Activated naive CD4-positive, alpha-beta T cell treated with anti-CD3 and anti-CD28 coated beads for 36 hours (primary cell): ENCODE measurements at regions of chr12 and their contacts with region 1.

Region 1: DNA sequence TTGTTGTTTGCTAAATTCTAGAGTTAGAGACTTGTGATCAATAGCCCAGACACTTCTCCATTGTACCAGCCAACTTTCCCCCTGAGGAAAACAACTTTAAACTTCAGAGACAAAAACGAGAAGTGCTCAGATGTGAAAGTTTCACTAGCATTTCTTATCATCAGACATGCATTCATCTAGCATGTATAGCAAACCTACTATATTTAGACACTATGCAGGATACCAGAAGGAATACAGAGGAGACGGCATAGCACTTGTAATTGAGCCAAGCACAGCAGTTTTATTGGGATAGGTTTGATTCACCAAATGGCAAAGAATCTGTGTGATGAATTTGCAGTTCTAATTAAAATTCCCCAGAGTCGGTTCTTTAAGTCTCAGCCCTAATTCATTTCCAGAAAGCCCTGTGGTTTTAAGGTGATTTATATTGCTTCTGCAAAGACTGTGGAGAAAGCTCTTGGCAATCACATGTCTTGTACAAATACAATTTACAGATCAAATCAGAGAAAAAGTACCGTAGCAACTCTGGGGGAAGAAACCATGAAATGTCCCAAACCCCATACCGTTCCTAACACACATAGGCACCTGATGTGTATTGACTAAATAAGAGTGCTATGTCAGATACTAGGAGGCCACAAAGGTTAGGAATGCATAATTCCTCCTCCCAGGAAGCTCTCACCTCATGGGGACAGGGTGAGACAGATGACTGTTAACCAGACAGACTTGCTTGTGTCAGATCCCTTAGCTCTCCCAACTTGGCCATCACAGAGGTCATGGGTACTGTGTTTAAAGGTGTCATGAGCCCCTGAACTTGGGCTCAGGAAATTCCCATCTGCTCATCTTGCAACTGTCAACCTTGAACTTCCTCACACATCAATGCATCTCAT is 69.6 kb upstream of the KRAS start:
- DNase-seq: peak; percentile 51
- H3K4me3 Mint-ChIP-seq: peak overlapping the region; percentile 33
- H3K27ac Mint-ChIP-seq: peak overlapping the region; percentile 87
- H3K4me1 Mint-ChIP-seq: peaks cover 54% of the 10 kb centered on the region
- H3K27me3 Mint-ChIP-seq: no peaks in the 10 kb centered on the region

Region 2: GRCh38 chr12:24902511-24903328 is 417.6 kb before region 1 on chr12:
- CTCF ChIA-PET with region 1: no interaction called
- intact Hi-C with region 1: loop called (anchors 2 kb)
- DNase-seq: peak; percentile 23
- H3K4me3 Mint-ChIP-seq: peak overlapping the region; percentile 85
- H3K27ac Mint-ChIP-seq: peak overlapping the region; percentile 71
- H3K4me1 Mint-ChIP-seq: peaks cover 31% of the 10 kb centered on the region
- H3K27me3 Mint-ChIP-seq: peaks cover 28% of the 10 kb centered on the region

Region 3: GRCh38 chr12:24960222-24960855 is 360.0 kb before region 1 on chr12:
- CTCF ChIA-PET with region 1: no interaction called
- intact Hi-C with region 1: loop called (anchors 2 kb)
- DNase-seq: peak; percentile 76
- H3K4me3 Mint-ChIP-seq: no peak overlapping the region
- H3K27ac Mint-ChIP-seq: no peak overlapping the region
- H3K4me1 Mint-ChIP-seq: peaks cover 23% of the 10 kb centered on the region
- H3K27me3 Mint-ChIP-seq: peaks cover 17% of the 10 kb centered on the region

Region 4: DNA sequence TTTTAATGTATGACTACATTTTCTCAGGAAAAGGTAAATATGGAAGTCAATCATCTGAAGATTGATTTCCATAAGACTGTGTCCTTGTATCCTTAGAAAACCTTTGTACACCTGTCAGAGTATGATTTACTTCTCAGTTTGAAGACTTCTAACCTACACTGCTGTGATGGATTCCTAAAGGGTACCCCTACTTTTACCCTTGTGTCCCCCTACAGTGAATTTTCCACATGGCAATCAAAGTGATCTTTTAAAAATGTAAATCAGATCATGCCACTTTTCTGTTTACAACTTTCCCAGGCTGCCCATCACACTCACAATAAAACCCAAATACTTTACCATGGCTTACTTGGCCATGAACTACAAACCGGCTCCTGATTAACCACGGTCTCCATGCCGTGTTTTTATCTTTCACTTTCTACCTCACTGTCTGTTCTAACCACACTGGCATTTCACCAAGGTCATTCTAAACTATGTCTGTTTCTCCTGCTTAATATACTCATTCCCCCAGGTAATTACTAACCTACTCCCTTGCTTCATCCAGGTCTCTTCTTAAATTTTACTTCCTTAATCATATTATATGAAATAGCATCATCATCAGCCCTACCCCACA is 133.5 kb before region 1 on chr12:
- CTCF ChIA-PET with region 1: no interaction called
- intact Hi-C with region 1: loop called (anchors 2 kb)
- DNase-seq: peak; percentile 37
- H3K4me3 Mint-ChIP-seq: peak overlapping the region; percentile 73
- H3K27ac Mint-ChIP-seq: peak overlapping the region; percentile 77
- H3K4me1 Mint-ChIP-seq: peaks cover 18% of the 10 kb centered on the region
- H3K27me3 Mint-ChIP-seq: no peaks in the 10 kb centered on the region

Region 5: DNA sequence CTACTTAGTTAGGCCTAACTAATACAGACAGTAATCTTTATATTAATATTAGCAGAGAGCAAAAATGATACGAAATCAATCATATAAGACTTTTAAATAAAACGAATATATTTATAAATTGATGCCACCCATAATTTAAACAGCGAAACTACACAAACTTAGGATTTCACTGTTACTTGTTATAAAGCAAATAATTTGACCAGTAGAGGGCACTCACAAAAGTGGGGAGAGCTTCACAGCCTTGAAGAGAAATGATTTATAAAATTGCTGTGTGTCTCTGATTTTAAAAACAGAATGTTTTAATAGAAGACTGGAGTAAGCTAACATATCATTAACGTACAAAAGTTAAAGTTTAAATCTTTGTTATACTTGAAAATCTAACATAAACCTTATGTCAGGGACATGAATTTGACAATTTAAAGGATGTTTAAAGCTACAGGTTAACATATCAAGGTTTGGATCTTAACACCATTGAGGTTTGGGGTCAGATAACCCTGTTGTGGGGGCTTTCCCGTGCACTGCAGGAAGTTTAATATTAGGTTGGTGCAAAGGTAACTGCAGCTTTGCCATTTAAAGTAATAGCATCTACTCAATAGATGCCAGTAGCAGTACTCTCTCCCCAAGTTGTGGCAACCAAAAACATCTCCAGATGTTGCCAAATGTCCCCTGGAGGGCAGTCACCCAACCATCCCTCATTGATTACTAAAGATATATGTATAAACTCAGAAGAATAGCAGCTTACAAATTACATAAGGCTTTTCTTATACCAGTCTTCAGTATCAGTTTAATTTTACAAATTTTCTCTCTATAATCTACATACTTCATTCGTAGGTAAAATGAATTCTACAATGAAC is 79.0 kb before region 1 on chr12:
- CTCF ChIA-PET with region 1: interaction called, 5 read pairs
- intact Hi-C with region 1: loop called (anchors 2 kb)
- DNase-seq: no peak
- H3K4me3 Mint-ChIP-seq: no peak overlapping the region
- H3K27ac Mint-ChIP-seq: no peak overlapping the region
- H3K4me1 Mint-ChIP-seq: peaks cover 46% of the 10 kb centered on the region
- H3K27me3 Mint-ChIP-seq: no peaks in the 10 kb centered on the region

Region 6: GRCh38 chr12:25276199-25276937 is 44.0 kb before region 1 on chr12:
- CTCF ChIA-PET with region 1: no interaction called
- intact Hi-C with region 1: loop called (anchors 1 kb)
- DNase-seq: peak; percentile 90
- H3K4me3 Mint-ChIP-seq: no peak overlapping the region
- H3K27ac Mint-ChIP-seq: peak overlapping the region; percentile 14
- H3K4me1 Mint-ChIP-seq: peaks cover 29% of the 10 kb centered on the region
- H3K27me3 Mint-ChIP-seq: no peaks in the 10 kb centered on the region

Region 7: GRCh38 chr12:25364529-25365339 is 44.4 kb after region 1 on chr12:
- CTCF ChIA-PET with region 1: interaction called, 3 read pairs
- intact Hi-C with region 1: loop called (anchors 1 kb)
- DNase-seq: peak; percentile 82
- H3K4me3 Mint-ChIP-seq: peak overlapping the region; percentile 39
- H3K27ac Mint-ChIP-seq: peak overlapping the region; percentile 56
- H3K4me1 Mint-ChIP-seq: peaks cover 15% of the 10 kb centered on the region
- H3K27me3 Mint-ChIP-seq: peaks cover 5% of the 10 kb centered on the region